ENCODE measurements at regions of chr10 and their contacts with region 1.

Region 1: DNA sequence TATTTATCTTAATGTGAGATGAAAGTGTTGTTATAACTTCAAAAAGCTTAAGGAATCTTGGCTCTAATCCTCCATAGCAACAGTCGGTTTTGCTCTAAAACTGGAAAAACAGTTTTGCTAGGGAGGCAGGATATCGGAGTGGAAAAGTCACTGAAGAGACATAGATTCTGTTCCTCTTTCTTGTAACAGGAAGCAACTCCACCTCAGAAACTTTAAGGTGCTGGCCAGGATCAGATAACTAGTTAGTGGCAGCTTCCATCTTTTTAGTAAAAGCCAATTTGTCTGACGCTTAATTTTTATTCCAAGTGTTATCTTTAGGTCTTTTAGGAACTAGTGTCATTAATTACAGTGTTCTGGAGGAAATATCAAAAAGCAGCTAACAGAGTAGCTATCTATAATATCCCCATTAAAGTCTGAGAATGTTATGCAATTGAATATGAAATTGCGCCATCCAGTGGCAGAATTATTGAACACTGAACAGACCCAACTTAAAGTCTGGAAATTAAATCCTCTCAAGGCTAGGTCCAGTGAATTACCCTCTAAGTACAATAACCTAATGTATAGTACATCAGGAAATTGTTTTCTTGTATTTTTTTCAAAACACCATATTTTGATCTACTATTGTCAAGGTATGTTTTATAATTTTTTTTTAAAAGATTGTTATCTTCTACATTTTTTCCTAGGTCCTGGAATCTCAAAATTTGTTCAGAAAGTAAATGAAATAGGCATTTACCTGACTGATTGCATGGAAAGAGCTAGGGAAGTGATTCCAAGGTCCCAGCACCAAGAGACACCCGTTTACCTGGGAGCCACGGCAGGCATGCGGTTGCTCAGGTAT is 65.9 kb upstream of the CC2D2B start:
- DNase-seq: peak; percentile 31 to 66 (median 38)
- ATAC-seq: peak; percentile 89
- H3K4me3 ChIP-seq: no peak overlapping the region
- H3K27ac ChIP-seq: no peak overlapping the region
- H3K4me1 ChIP-seq: no peaks in the 10 kb centered on the region
- H3K27me3 ChIP-seq: no peaks in the 10 kb centered on the region
- CTCF ChIP-seq: peak; percentile 55 to 70 (median 61); a peak in 5 of 6 replicates
- EP300 ChIP-seq: no peak
- POLR2A ChIP-seq: no peak
- RAD21 ChIP-seq: peak; percentile 72 to 86

Region 2: DNA sequence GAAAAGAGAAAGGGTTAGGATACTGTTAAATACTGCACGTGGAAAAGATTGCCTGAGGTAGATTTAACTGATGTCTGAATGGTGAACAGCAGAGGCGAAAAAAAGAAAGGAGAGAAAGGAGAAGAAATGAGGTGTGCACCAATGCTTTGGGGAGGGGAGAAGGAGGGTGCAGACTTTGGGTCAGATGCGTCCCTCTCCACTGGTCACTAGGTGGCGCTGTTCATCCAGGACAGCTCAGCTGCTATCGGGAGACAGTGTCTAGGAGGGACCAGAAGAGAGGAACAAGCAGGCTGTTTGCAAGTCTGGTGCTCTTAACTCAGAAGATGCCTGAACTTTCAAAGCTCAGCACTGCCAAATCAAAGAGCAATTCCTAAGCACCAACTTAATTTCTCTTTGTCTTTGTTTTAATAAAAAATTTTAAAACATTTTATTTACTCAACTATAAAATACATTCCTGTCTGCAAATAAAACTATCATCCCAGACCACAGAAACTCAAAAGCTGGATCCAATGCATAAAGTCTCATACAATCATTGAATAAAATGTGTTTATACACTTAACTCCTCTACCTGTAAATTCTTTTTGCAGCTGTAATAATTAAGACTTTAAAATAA is 467.2 kb before region 1 on chr10:
- CTCF ChIA-PET with region 1: no interaction called
- POLR2A ChIA-PET with region 1: no interaction called
- in situ Hi-C with region 1: loop called (anchors 25 kb)
- intact Hi-C with region 1: loop called (anchors 10 kb)
- DNase-seq: peak; percentile 79 to 86 (median 83)
- ATAC-seq: peak; percentile 99
- H3K4me3 ChIP-seq: no peak overlapping the region
- H3K27ac ChIP-seq: no peak overlapping the region
- H3K4me1 ChIP-seq: no peaks in the 10 kb centered on the region; a peak in 1 of 5 replicates
- H3K27me3 ChIP-seq: no peaks in the 10 kb centered on the region
- CTCF ChIP-seq: peak; percentile 87 to 88 (median 87)
- EP300 ChIP-seq: no peak
- POLR2A ChIP-seq: no peak
- RAD21 ChIP-seq: peak; percentile 87 to 96

Region 3: DNA sequence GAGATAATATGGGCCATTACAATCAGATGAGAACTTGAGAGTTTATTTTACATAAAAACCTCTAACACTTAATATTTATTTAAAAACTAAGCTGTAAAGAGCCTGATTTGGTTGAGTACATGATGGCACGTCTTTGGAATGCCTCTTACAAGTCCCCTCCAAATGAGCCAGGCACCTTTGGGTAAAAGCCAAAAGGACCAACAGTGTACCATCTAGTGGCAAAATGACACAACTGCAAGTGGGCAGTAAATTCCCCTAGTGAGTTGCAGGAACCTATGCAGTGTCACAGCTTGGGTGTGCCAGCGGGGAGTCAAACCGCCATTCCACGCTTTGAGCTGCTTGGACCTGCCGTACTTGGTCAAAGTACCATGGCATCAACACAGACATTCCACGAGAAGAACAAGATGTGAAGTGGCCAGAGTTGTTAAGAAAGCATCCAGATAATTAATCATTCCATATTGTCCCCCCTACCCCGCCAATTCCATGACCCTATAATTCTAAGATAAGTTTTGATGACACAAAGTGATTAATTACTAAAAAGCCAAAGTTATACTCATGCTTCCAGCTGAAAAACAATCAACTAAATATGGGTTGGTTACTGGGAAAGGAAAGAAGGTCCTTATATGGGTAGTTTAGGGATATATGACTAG is 395.9 kb before region 1 on chr10:
- CTCF ChIA-PET with region 1: no interaction called
- POLR2A ChIA-PET with region 1: no interaction called
- in situ Hi-C with region 1: no loop called
- intact Hi-C with region 1: no loop called
- DNase-seq: peak; percentile 59 to 72 (median 68)
- ATAC-seq: peak; percentile 92
- H3K4me3 ChIP-seq: no peak overlapping the region
- H3K27ac ChIP-seq: peak overlapping the region; percentile 21; the same call in 1 of the 3 replicates
- H3K4me1 ChIP-seq: peaks cover 0 to 11% of the 10 kb centered on the region in 2 experiments; a peak in 1 of 5 replicates
- H3K27me3 ChIP-seq: no peaks in the 10 kb centered on the region
- CTCF ChIP-seq: peak; percentile 73 to 77 (median 73)
- EP300 ChIP-seq: no peak
- POLR2A ChIP-seq: no peak
- RAD21 ChIP-seq: peak; percentile 43 to 55; a peak in 2 of 4 replicates

Region 4: GRCh38 chr10:95741807-95742467 is 99.9 kb before region 1 on chr10:
- CTCF ChIA-PET with region 1: no interaction called
- POLR2A ChIA-PET with region 1: no interaction called
- in situ Hi-C with region 1: no loop called
- intact Hi-C with region 1: loop called (anchors 5 kb)
- DNase-seq: peak; percentile 17 to 78 (median 42)
- ATAC-seq: peak; percentile 95
- H3K4me3 ChIP-seq: no peak overlapping the region
- H3K27ac ChIP-seq: no peak overlapping the region
- H3K4me1 ChIP-seq: no peaks in the 10 kb centered on the region
- H3K27me3 ChIP-seq: no peaks in the 10 kb centered on the region
- CTCF ChIP-seq: peak; percentile 25 to 37 (median 27); a peak in 3 of 6 replicates
- EP300 ChIP-seq: peak; percentile 67
- POLR2A ChIP-seq: no peak
- RAD21 ChIP-seq: no peak

Region 5: DNA sequence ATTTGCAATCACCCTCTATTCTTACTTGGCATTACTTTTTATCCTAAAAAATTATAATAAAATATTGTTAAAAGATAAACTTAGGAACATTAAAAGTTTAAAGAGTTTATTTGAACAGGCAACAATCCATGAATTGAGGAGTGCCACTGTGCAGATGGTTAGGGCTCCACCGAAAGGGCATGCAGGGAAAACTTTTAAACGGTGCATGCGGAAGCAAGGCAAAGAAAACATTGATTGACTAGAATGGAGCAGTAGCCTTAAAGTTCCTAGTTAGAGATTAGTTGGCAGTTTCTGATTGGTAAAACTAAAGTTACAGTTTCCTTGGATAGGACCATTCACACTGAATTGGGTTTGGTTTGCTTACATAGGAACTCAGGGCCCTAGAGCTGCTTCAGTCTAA is 83.2 kb after region 1 on chr10:
- CTCF ChIA-PET with region 1: no interaction called
- POLR2A ChIA-PET with region 1: no interaction called
- in situ Hi-C with region 1: no loop called
- intact Hi-C with region 1: no loop called
- DNase-seq: no peak
- ATAC-seq: no peak
- H3K4me3 ChIP-seq: no peak overlapping the region
- H3K27ac ChIP-seq: no peak overlapping the region
- H3K4me1 ChIP-seq: no peaks in the 10 kb centered on the region
- H3K27me3 ChIP-seq: no peaks in the 10 kb centered on the region
- CTCF ChIP-seq: no peak
- EP300 ChIP-seq: no peak
- POLR2A ChIP-seq: no peak
- RAD21 ChIP-seq: no peak